SK-N-SH (cell line): ENCODE measurements at regions of chr13 and their contacts with region 1.

Region 1: DNA sequence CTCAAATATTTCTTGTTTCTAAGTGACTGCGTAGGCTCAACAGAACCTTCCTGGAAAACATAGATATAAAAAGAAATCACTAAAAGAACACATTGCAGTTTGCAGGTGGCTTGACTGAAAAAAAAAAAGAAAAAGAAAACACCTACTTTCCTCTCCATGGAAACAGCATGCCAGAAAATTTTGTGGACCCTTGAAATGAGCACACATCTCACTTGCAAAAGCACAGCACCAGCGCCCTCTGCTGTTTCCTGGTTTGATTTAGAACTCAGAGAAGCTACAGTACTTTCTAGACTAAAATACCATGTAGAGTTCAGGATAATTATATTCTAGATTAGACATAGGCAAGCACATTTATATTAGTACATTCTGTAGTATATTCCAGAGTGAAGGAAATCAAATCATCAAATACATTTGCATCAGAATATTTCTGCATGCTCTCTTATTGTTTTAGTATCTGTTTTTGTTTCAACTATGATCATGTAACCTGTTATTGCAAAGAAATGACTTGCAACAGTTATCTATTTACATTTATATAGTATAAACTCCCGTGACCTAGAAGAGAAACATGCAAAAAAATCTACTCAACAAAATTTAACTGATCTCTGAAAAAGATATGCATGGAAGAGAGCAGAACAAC is 22.3 kb upstream of the XPO4 start:
- DNase-seq: peak; percentile 59
- H3K4me3 ChIP-seq: no peak overlapping the region; a peak in 1 of 4 replicates
- H3K27ac ChIP-seq: no peak overlapping the region
- H3K4me1 ChIP-seq: no peaks in the 10 kb centered on the region; a peak in 1 of 4 replicates
- H3K27me3 ChIP-seq: no peaks in the 10 kb centered on the region
- CTCF ChIP-seq: peak; percentile 95
- EP300 ChIP-seq: no peak
- RAD21 ChIP-seq: peak; percentile 93

Region 2: DNA sequence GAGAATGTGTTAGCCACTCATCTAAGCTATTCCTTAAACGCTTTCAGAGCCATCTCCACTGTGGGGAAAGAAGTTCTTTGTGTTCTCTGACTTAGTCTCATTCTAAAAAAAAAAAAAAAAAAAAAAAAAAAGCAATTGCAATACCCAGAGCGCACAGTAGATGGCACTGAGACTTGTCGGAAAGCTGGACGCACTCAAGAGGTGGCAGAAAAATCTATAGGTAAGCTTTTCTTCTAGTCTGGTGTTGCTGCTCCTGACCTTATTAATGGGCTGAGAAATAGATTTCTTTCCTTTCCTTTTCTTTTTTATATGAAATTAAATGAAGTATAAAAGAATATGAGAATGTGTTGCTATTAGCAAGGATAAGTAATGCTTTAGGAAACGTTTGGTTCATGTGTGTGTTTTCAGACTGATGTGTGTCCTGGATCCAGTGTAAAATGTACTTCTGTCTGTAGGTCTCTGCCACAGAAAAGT is 727.5 kb before region 1 on chr13:
- CTCF ChIA-PET with region 1: interaction called, 12 read pairs
- POLR2A ChIA-PET with region 1: no interaction called
- DNase-seq: peak; percentile 59
- H3K4me3 ChIP-seq: no peak overlapping the region
- H3K27ac ChIP-seq: no peak overlapping the region
- H3K4me1 ChIP-seq: peaks cover 0 to 11% of the 10 kb centered on the region in 2 experiments; a peak in 1 of 4 replicates
- H3K27me3 ChIP-seq: peaks cover 59% of the 10 kb centered on the region
- CTCF ChIP-seq: peak; percentile 67
- EP300 ChIP-seq: no peak
- RAD21 ChIP-seq: peak; percentile 64

Region 3: GRCh38 chr13:20495082-20496023 is 429.5 kb before region 1 on chr13:
- CTCF ChIA-PET with region 1: interaction called, 74 read pairs
- POLR2A ChIA-PET with region 1: no interaction called
- DNase-seq: peak; percentile 74
- H3K4me3 ChIP-seq: no peak overlapping the region; a peak in 1 of 4 replicates
- H3K27ac ChIP-seq: no peak overlapping the region
- H3K4me1 ChIP-seq: no peaks in the 10 kb centered on the region
- H3K27me3 ChIP-seq: no peaks in the 10 kb centered on the region
- CTCF ChIP-seq: peak; percentile 97
- EP300 ChIP-seq: no peak
- RAD21 ChIP-seq: peak; percentile 95

Region 4: GRCh38 chr13:20713751-20714150 is 211.1 kb before region 1 on chr13:
- CTCF ChIA-PET with region 1: interaction called, 17 read pairs
- POLR2A ChIA-PET with region 1: no interaction called
- DNase-seq: no peak
- H3K4me3 ChIP-seq: no peak overlapping the region
- H3K27ac ChIP-seq: peak overlapping the region in 1 of 2 experiments; percentile 86; a peak in 3 of 4 replicates
- H3K4me1 ChIP-seq: peaks cover 0 to 27% of the 10 kb centered on the region in 2 experiments; a peak in 3 of 4 replicates
- H3K27me3 ChIP-seq: no peaks in the 10 kb centered on the region
- CTCF ChIP-seq: no peak
- EP300 ChIP-seq: no peak
- RAD21 ChIP-seq: no peak

Region 5: GRCh38 chr13:20940083-20940880 is 15.4 kb after region 1 on chr13:
- CTCF ChIA-PET with region 1: interaction called, 27 read pairs
- POLR2A ChIA-PET with region 1: no interaction called
- DNase-seq: no peak
- H3K4me3 ChIP-seq: no peak overlapping the region
- H3K27ac ChIP-seq: no peak overlapping the region
- H3K4me1 ChIP-seq: no peaks in the 10 kb centered on the region
- H3K27me3 ChIP-seq: no peaks in the 10 kb centered on the region
- CTCF ChIP-seq: no peak
- EP300 ChIP-seq: no peak
- RAD21 ChIP-seq: no peak

Region 6: GRCh38 chr13:21528621-21529020 is 603.7 kb after region 1 on chr13:
- CTCF ChIA-PET with region 1: no interaction called
- POLR2A ChIA-PET with region 1: no interaction called
- DNase-seq: no peak
- H3K4me3 ChIP-seq: no peak overlapping the region
- H3K27ac ChIP-seq: peak overlapping the region in 1 of 2 experiments; percentile 8; a peak in 1 of 4 replicates
- H3K4me1 ChIP-seq: peaks cover 0 to 5% of the 10 kb centered on the region in 2 experiments; a peak in 3 of 4 replicates
- H3K27me3 ChIP-seq: no peaks in the 10 kb centered on the region
- CTCF ChIP-seq: no peak
- EP300 ChIP-seq: no peak
- RAD21 ChIP-seq: no peak